ENCODE measurements at regions of chr16 and their contacts with region 1.

Region 1: GRCh38 chr16:20614186-20615141 is 38.3 kb upstream of the ACSM2B start:
- DNase-seq: no peak
- H3K4me3 ChIP-seq: no peak overlapping the region
- H3K27ac ChIP-seq: no peak overlapping the region
- H3K4me1 ChIP-seq: no peaks in the 10 kb centered on the region
- H3K27me3 ChIP-seq: peaks cover 62% of the 10 kb centered on the region
- CTCF ChIP-seq: no peak

Region 2: GRCh38 chr16:20650400-20651166 is 36.1 kb after region 1 on chr16:
- CTCF ChIA-PET with region 1: no interaction called
- POLR2A ChIA-PET with region 1: no interaction called
- intact Hi-C with region 1: no loop called
- DNase-seq: no peak
- H3K4me3 ChIP-seq: no peak overlapping the region
- H3K27ac ChIP-seq: no peak overlapping the region
- H3K4me1 ChIP-seq: no peaks in the 10 kb centered on the region
- H3K27me3 ChIP-seq: no peaks in the 10 kb centered on the region
- CTCF ChIP-seq: no peak

Region 3: DNA sequence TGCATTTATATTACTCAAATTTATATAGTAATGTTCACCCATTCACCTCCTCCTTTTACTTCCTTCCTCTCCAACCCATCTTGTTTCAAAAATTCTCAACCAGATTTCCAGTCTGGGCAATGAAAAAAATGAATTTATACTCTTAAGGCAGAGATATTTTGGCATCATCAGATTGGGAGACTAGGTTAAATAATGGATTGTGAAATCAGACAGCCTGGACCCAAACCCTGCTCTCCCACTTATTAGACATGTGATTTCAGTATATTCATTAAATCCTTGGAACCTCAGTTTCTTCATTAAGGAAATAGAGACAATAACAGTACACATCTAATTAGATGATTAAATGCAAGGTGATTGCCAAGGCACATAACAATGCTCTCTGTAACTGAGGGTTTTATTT is 75.2 kb after region 1 on chr16:
- CTCF ChIA-PET with region 1: interaction called, 5 read pairs
- POLR2A ChIA-PET with region 1: no interaction called
- intact Hi-C with region 1: loop called (anchors 5 kb)
- DNase-seq: no peak
- H3K4me3 ChIP-seq: no peak overlapping the region
- H3K27ac ChIP-seq: no peak overlapping the region
- H3K4me1 ChIP-seq: no peaks in the 10 kb centered on the region
- H3K27me3 ChIP-seq: peaks cover 11% of the 10 kb centered on the region
- CTCF ChIP-seq: no peak